Gastrocnemius medialis (tissue), 4 donors: ENCODE measurements at regions of chr10 and their contacts with region 1.

Region 1: GRCh38 chr10:31318854-31319601 is at the start of gene ZEB1:
- DNase-seq: peak; percentile 89 to 92
- ATAC-seq: peak; percentile 56 to 75
- H3K4me3 ChIP-seq: peak within 1 kb of the TSS; percentile 91 to 96 (median 94)
- H3K27ac ChIP-seq: peak within 1 kb of the TSS; percentile 97 to 99 (median 98)
- H3K4me1 ChIP-seq: peaks cover 29 to 50% of the 10 kb centered on the region in 2 donors
- H3K27me3 ChIP-seq: no peaks in the 10 kb centered on the region
- CTCF ChIP-seq: peak; percentile 56 to 74 (median 66)
- POLR2A ChIP-seq: peak; percentile 61 to 77
- total RNA-seq, gene ZEB1: 67.4 to 175 (median 137) TPM

Region 2: DNA sequence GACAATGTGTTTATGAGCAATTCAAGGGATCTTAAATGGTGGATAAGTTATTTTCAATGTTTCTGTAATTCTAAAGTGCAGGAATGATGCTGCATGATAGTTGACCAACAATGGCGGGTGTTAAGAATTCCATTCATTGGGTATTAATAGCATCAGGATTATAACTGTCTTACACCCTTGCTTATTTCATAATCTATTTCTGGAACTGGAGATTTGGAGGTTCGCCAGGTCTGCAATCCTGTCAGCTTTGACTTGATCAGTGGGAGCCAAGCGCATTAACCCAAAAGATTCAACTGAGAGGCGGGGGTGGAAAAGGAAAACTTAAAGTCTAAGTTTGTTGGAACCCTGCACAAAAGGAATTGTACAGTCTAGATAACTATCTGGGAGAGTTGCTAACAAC is 114.9 kb before region 1 on chr10:
- in situ Hi-C with region 1: no loop called
- intact Hi-C with region 1: loop called (anchors 2 kb)
- DNase-seq: peak; percentile 53 to 58
- ATAC-seq: peak; percentile 94 to 97
- H3K4me3 ChIP-seq: no peak overlapping the region
- H3K27ac ChIP-seq: peak overlapping the region in 2 of 4 donors; percentile 10 to 45
- H3K4me1 ChIP-seq: peaks cover 12 to 18% of the 10 kb centered on the region in 2 donors
- H3K27me3 ChIP-seq: no peaks in the 10 kb centered on the region
- CTCF ChIP-seq: no peak
- POLR2A ChIP-seq: no peak

Region 3: GRCh38 chr10:31490858-31491504 is 172.0 kb after region 1 on chr10:
- in situ Hi-C with region 1: no loop called
- intact Hi-C with region 1: loop called (anchors 5 kb)
- DNase-seq: no peak
- ATAC-seq: peak; percentile 73 to 83
- H3K4me3 ChIP-seq: no peak overlapping the region
- H3K27ac ChIP-seq: peak overlapping the region in 1 of 4 donors; percentile 7
- H3K4me1 ChIP-seq: no peaks in the 10 kb centered on the region
- H3K27me3 ChIP-seq: no peaks in the 10 kb centered on the region
- CTCF ChIP-seq: peak; percentile 50 to 66 (median 60)
- POLR2A ChIP-seq: no peak

Region 4: DNA sequence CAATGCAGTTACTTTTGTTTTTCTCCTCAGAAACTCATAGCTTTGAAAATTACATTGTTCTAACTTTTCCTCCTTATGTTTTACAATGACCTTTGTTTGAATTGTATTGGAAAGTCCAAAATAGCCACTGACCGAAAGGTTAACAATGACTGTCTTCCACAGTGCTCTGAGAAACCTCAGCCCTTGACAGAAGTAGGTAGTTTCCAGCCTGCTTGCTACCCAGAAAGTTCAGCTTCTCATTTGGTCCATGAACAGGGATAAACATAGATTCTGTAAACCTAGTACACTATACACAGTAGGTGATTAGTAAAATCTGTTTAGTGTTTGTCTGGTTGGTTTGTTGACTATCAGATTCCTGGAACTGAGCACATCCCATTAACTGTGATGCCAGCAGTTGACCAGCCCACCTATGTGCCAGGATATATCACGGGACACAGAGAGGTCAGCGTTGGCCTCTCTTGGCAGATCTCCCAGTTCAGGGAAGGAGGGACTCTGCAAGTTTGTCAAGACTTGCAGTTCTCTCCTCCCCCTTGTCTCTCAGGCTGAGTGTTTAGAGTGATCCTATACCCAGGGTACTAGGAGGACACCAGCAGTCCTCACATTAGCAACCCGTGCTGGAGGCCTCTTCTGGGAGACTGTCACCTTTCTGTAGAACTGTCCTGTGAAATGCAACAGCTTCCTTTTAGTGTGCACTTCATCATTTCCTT is 312.0 kb after region 1 on chr10:
- in situ Hi-C with region 1: no loop called
- intact Hi-C with region 1: no loop called
- DNase-seq: peak in 1 of 2 donors; percentile 33
- ATAC-seq: peak in 1 of 2 donors; percentile 62
- H3K4me3 ChIP-seq: no peak overlapping the region
- H3K27ac ChIP-seq: peak overlapping the region in 1 of 4 donors; percentile 22
- H3K4me1 ChIP-seq: no peaks in the 10 kb centered on the region
- H3K27me3 ChIP-seq: no peaks in the 10 kb centered on the region
- CTCF ChIP-seq: no peak
- POLR2A ChIP-seq: no peak

Region 5: DNA sequence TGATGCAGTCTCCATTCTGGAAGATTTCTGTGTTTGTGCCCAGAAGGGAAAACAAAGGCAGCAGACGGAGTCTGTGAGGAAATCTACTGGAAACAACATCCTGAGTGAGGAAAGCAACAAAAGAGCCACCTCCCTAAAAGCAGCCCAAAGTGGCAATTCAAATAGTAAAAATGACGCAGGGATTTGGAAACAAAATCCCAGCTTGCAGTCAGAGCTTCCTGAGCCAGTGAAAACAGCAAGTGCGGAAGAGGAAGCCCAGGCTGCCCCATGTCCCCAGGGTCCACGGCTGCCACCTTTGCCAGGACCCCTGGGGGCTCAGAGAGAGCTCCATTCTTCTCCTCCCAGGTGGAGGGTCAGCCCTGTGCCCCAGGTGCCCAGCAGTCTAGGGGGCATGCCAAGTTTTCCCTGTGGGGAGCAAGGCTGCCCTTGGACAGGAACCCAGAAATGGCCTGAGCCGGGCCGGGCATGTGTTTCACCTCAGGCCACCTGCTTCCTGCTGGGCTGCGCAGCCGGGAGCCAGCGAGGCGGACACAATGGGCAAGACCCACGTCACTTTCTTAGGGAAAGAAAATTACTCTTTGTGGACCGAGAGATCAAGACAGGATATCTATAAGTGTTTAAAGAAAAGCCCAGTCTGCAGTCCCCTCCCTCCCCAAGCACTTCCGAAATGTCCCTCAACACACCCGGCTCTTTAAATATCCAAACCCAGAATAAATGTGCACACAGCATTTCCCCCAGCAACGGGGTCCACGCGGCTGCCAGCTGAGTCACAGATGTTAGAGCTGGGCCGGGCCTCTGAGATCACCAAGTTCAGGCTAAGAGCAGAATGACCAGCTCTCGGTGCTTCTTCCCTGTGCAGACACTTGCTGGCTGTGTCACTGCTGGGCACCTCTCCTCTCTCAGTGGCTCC is 378.5 kb after region 1 on chr10:
- in situ Hi-C with region 1: no loop called
- intact Hi-C with region 1: loop called (anchors 2 kb)
- DNase-seq: peak; percentile 64 to 77
- ATAC-seq: peak; percentile 63 to 70
- H3K4me3 ChIP-seq: peak overlapping the region; percentile 10 to 45 (median 22)
- H3K27ac ChIP-seq: peak overlapping the region; percentile 78 to 85 (median 82)
- H3K4me1 ChIP-seq: peaks cover 40 to 51% of the 10 kb centered on the region in 2 donors
- H3K27me3 ChIP-seq: no peaks in the 10 kb centered on the region
- CTCF ChIP-seq: no peak
- POLR2A ChIP-seq: peak in 1 of 2 donors; percentile 20

Region 6: GRCh38 chr10:31808258-31809218 is 489.5 kb after region 1 on chr10:
- in situ Hi-C with region 1: loop called in 2 of 4 experiments (anchors 10 to 25 kb)
- intact Hi-C with region 1: loop called (anchors 5 kb)
- DNase-seq: peak; percentile 24 to 57
- ATAC-seq: peak; percentile 91
- H3K4me3 ChIP-seq: peak overlapping the region; percentile 45 to 60 (median 53)
- H3K27ac ChIP-seq: peak overlapping the region; percentile 85 to 92 (median 89)
- H3K4me1 ChIP-seq: peaks cover 21 to 32% of the 10 kb centered on the region in 2 donors
- H3K27me3 ChIP-seq: no peaks in the 10 kb centered on the region
- CTCF ChIP-seq: peak; percentile 58 to 82 (median 75)
- POLR2A ChIP-seq: peak in 1 of 2 donors; percentile 25